A549 (cell line): ENCODE measurements at regions of chr7 and their contacts with region 1.

Region 1: GRCh38 chr7:25191640-25192039 is 36.6 kb downstream of the NPVF start:
- DNase-seq: no peak
- ATAC-seq: no peak
- H3K4me3 ChIP-seq: no peak overlapping the region
- H3K27ac ChIP-seq: no peak overlapping the region
- H3K4me1 ChIP-seq: no peaks in the 10 kb centered on the region
- CTCF ChIP-seq: no peak
- EP300 ChIP-seq: no peak
- POLR2A ChIP-seq: no peak
- RAD21 ChIP-seq: no peak

Region 2: DNA sequence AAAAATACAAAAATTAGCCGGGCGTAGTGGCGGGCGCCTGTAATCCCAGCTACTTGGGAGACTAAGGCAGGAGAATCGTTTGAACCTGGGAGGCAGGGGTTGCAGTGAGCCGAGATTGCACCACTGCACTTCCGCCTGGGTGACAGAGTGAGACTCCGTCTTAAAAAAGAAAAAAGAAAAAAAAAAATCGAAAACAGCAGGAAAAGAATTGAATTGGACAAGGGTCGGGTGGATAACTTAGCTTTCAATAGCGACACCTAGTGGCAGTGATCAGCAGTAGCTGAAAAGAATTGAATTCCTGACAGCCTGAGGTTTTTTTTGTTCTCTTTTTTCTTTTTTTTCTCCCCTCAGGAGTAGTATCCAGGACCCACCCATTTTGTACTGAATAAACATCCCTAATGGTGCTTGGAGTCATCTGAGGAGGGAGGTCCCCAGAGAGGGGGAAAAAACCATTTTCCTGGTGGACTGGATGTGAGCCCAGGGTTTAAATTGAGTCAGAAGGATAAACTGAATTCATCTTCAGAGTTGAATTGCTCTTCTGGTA is 121.7 kb before region 1 on chr7:
- CTCF ChIA-PET with region 1: no interaction called
- POLR2A ChIA-PET with region 1: no interaction called
- DNase-seq: peak; percentile 82 to 84
- ATAC-seq: peak; percentile 81 to 87
- H3K4me3 ChIP-seq: peak overlapping the region; percentile 41
- H3K27ac ChIP-seq: peak overlapping the region; percentile 63 to 84
- H3K4me1 ChIP-seq: peaks cover 21% of the 10 kb centered on the region
- CTCF ChIP-seq: peak; percentile 95
- EP300 ChIP-seq: no peak
- POLR2A ChIP-seq: no peak
- RAD21 ChIP-seq: peak; percentile 85 to 89

Region 3: GRCh38 chr7:25179771-25180591 is 11.7 kb before region 1 on chr7:
- CTCF ChIA-PET with region 1: interaction called, 10 read pairs
- POLR2A ChIA-PET with region 1: interaction called, 4 read pairs
- DNase-seq: peak; percentile 85 to 88
- ATAC-seq: peak; percentile 93 to 99
- H3K4me3 ChIP-seq: peak overlapping the region; percentile 80
- H3K27ac ChIP-seq: peak overlapping the region; percentile 84 to 95
- H3K4me1 ChIP-seq: 0 out of 3 replicates have a peak, but pooled peaks cover 4% of the 10 kb centered on the region
- CTCF ChIP-seq: peak; percentile 85
- EP300 ChIP-seq: no peak
- POLR2A ChIP-seq: peak; percentile 81
- RAD21 ChIP-seq: no peak; a peak in 1 of 5 replicates